GM10248 (cell line): ENCODE measurements at regions of chr14 and their contacts with region 1.

Region 1: DNA sequence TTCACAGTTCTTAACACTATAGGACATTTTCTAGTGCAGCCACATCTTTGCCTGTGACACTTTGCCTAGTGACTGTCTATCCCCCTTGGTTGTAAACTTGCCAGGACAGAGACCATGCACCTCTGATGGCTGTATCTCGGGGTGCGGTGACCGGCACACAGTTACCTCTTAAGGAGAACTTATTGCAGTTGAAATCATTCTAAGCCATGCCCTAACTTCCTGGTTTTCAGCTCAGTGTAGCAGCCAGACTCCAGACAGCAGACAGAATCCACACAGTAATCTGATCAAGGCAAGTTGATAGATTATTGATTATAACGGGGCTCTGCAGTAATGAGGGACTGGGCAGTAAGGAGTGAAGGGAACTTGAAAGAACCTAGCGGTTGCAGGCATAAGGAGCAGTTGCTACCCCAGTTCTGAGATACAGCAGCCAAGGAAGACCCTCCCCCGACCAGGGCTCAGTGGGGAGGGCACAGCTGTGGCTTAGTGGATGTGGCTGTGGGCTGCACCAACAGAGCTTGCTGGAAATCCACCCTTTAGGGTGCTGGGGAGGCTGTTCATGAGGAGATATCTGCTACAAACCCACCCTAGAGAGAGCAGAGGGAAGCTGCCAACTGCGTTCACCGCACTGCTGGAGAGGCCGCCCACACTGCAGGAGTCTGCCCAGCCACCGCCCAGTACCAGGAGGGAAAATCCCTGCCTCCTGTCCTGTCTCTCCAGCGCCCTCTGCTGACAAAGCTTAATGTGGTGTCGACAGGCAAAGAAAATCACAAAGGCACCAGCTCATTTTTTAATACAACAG is 58.2 kb upstream of the BEGAIN start:
- DNase-seq: peak; percentile 88
- CTCF ChIP-seq: peak; percentile 69

Region 2: DNA sequence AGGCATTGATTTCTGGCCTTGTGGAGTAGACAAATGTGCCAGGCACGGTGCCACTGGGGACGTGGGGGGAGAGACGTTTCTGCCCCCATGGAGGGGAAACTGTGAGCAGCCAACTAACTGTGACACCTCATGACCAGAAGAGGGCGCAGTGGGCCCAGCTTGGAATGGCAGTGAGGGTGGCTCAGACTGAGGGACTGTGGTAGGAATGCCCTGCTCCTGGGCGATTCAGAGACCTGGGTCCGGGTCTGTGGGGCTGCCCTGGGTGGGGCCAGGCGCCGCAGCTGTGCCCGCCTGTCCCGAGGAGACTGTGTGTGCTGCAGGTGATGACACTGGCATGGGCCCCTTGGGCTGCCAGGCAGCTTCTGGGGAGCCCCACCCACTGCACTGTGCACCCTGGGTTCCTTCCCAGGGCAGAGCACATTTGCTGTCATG is 261.6 kb before region 1 on chr14:
- CTCF ChIA-PET with region 1: interaction called, 120 read pairs
- POLR2A ChIA-PET with region 1: no interaction called
- DNase-seq: peak; percentile 83
- CTCF ChIP-seq: peak; percentile 91

Region 3: GRCh38 chr14:100392356-100392755 is 253.0 kb before region 1 on chr14:
- CTCF ChIA-PET with region 1: interaction called, 120 read pairs
- POLR2A ChIA-PET with region 1: no interaction called
- DNase-seq: no peak
- CTCF ChIP-seq: no peak

Region 4: DNA sequence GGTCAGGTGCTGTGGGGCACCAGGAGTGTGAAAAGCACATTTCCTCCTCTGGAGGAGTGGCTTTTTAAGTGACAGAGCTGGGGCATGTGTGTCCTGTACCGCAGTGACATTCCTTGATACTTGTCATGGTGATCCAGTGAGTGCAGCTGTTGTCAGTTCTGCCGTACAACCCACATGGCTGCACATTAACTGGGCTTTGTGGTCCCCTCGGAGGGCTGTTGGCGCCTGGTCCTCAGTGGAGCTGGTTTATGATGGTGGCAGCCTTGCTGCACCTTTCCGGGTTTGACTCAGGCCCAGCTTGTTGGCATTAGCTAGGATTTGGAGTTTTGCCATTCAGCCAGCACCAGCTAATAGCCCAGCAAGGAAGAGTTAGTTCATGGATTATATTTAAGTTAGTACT is 245.3 kb before region 1 on chr14:
- CTCF ChIA-PET with region 1: interaction called, 11 read pairs
- POLR2A ChIA-PET with region 1: no interaction called
- DNase-seq: no peak
- CTCF ChIP-seq: no peak

Region 5: DNA sequence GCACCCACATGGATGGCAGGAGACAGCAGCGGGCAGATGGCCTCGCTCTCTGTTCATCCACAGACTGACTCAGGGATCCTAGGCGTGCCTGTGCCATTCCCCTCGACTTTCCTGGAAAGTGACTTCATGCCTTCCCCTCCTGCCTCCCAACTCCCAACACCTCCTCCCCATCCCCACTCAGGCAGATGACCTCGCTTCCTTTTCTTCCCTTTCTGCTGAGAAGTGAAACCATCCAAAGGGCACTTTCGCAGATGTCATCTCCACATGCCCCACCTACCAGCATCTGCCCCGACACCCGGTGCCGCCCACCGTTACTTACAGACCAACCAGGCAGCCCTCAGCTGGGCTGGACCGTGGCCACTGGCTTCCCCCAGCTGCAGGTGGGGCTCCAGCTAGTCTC is 87.7 kb before region 1 on chr14:
- CTCF ChIA-PET with region 1: no interaction called
- POLR2A ChIA-PET with region 1: no interaction called
- DNase-seq: no peak
- CTCF ChIP-seq: no peak

Region 6: DNA sequence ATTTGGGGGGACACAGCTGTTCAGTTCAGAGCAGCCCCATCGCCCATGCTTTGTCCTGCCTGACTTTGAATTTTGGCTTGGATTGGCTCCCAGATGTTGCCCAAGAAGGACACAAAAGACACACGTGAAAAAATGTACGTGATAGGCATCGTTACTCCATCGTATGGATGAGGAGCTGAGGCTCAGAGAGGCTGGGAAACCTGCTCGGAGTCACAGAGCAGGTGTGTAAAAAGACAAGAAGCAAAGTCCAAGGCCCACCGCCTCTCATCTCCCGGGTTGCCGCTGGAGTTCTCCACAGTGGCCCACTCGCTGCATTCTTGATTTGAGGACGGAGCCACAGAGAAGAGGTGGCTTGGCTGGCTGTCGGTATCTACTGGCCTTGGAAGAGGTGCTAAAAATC is 17.2 kb before region 1 on chr14:
- CTCF ChIA-PET with region 1: interaction called, 11 read pairs
- POLR2A ChIA-PET with region 1: no interaction called
- DNase-seq: no peak
- CTCF ChIP-seq: no peak

Region 7: DNA sequence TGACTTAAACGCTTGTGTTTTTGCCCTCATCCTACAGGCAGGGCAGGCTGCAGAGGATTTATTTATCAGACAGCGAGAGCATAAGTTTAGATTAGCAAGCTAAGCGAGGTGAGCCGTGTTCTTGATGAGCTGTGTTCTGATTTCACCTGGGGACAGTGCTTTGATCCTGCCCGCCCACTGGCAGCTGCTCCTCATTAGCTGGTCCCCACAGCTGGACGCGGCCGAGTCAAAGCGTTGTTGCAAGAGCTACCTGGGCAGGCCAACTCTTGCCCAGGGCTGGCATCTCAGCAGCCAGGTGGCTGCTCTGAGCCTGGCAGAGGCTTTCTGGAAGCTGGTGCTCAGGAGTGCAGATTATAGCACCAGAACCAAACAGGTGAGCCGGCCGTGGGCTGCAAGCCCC is 11.4 kb before region 1 on chr14:
- CTCF ChIA-PET with region 1: interaction called, 27 read pairs
- POLR2A ChIA-PET with region 1: no interaction called
- DNase-seq: no peak
- CTCF ChIP-seq: no peak

Region 8: DNA sequence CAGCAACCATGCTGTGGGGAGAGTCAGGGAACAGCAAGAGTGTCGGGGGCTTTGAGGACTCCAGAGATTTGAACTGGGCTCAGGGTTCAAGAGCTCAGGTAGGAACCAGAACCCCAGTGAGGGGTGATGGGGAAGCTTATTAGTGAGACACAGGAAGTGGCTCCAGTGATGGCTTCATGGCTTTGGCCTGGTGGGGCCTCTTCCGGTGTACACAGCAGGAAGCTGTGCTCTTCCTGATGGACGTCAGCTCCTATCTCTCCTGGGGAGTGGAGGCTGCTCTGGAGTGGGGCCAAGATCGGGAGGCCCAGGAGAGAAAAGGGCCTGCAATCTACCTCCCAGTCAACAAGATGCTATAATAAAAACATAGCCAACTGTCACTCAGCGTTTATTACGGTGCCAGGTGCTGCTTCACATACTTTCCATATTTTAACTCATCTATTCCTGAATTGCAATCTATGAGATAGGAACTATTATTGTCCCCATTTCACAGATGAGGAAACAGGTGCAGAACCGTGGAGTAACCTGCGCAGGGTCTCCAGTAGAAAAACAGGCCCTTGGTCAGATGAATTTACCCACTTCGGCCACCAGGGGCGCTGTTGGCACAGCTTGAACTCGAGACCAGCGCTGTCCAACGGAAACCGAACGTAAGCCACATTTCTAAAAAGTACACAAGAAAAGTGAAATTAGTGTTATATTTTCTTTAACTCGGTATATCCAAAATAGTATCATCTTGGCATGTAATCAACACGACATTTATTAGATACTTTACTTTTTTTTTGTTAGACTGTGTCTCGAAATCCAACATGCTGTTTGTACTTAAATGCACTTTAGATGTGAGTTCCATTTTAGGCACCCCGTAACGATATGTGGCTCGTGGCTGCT is 17.7 kb after region 1 on chr14:
- CTCF ChIA-PET with region 1: interaction called, 23 read pairs
- POLR2A ChIA-PET with region 1: no interaction called
- DNase-seq: peak; percentile 77
- CTCF ChIP-seq: peak; percentile 82